ENCODE measurements at regions of chr3 and their contacts with region 1.

Region 1: DNA sequence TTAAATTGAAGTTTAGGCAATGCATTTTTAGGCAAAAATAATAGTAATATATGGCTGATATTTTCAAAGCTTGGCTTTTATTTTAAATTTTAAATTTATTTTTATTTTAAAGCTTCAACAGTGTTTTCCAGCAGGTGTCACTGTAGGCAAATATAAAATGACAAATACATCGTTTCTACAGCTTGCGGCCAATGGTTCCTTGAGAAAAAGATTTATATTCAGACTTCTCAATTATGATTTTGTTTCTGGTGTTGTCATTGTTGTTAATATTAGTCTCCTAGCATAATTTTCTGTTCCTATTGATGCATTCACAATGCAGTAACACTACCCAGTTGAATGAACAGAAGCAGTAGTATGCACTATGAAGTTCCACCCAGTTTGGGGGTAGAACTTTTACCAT is 220.7 kb upstream of the DNAJC19 start:
- DNase-seq: peak; percentile 45
- H3K4me3 ChIP-seq: no peak overlapping the region
- H3K27ac ChIP-seq: no peak overlapping the region
- H3K4me1 ChIP-seq: no peaks in the 10 kb centered on the region
- H3K27me3 ChIP-seq: peaks cover 15% of the 10 kb centered on the region
- CTCF ChIP-seq: peak; percentile 59

Region 2: DNA sequence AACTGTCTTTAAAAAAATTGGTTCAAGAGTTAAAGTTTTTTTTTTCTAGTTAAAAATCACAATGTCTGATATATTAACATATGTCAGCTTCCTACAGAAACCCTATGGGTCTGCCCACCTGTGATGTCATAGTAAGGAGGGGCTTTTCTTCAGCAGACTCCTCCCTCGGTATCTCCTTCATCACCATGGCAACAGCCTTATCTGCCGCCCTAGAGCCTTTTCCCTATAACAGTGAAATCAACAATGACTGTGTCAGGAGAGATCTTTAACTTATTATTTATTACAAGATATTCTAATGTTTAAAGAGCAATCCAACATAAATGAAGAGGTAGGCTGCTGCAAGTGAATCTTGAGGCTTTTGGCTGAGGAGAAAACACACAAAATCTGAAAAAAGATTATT is 1312.3 kb before region 1 on chr3:
- CTCF ChIA-PET with region 1: no interaction called
- POLR2A ChIA-PET with region 1: no interaction called
- intact Hi-C with region 1: no loop called
- DNase-seq: peak; percentile 83
- H3K4me3 ChIP-seq: no peak overlapping the region
- H3K27ac ChIP-seq: no peak overlapping the region
- H3K4me1 ChIP-seq: peaks cover 7% of the 10 kb centered on the region
- H3K27me3 ChIP-seq: peaks cover 93% of the 10 kb centered on the region
- CTCF ChIP-seq: no peak

Region 3: GRCh38 chr3:180870008-180870699 is 340.1 kb before region 1 on chr3:
- CTCF ChIA-PET with region 1: no interaction called
- POLR2A ChIA-PET with region 1: no interaction called
- intact Hi-C with region 1: no loop called
- DNase-seq: no peak
- H3K4me3 ChIP-seq: no peak overlapping the region
- H3K27ac ChIP-seq: no peak overlapping the region
- H3K4me1 ChIP-seq: no peaks in the 10 kb centered on the region
- H3K27me3 ChIP-seq: peaks cover 14% of the 10 kb centered on the region
- CTCF ChIP-seq: no peak

Region 4: DNA sequence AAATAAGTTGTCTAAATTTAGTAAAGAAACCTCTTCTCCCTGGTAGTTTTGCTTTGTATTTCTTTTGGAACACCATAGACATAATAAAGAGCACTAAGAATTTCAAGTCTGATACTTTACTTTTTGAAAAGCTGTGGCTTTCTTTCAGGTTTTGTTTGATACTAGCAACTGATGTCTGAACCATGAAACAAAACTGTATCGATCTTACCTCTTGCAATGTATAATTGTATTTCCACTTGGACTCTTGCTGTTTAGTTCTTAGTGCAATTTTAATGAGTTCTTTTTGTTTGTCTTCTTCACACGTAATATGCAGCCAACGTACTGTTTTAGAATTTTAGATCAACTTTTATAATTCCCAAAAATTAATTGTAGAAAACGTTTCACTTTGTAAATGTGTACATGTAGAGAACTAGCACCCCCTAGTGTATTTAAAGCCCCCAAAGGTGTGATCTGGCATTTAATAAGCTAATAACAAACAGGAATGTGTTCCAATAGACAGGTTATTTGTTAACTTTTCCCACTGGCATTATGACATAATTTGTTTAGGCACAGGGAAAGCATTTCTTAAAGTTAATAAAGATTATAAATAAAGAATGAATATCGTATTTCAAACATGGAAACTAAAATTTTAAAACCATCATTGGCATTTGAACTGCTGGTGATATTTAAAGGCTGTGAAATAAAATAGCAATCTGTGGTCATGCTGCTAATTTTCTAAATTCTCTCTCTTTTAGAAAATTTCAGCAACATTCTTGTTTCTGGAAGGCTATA is 68.4 kb after region 1 on chr3:
- CTCF ChIA-PET with region 1: no interaction called
- POLR2A ChIA-PET with region 1: no interaction called
- intact Hi-C with region 1: loop called (anchors 1 kb)
- DNase-seq: peak; percentile 13
- H3K4me3 ChIP-seq: no peak overlapping the region
- H3K27ac ChIP-seq: no peak overlapping the region
- H3K4me1 ChIP-seq: no peaks in the 10 kb centered on the region
- H3K27me3 ChIP-seq: peaks cover 44% of the 10 kb centered on the region
- CTCF ChIP-seq: peak; percentile 55

Region 5: GRCh38 chr3:181700168-181701087 is 490.2 kb after region 1 on chr3:
- CTCF ChIA-PET with region 1: interaction called, 6 read pairs
- POLR2A ChIA-PET with region 1: no interaction called
- intact Hi-C with region 1: loop called (anchors 2 kb)
- DNase-seq: peak; percentile 85
- H3K4me3 ChIP-seq: peak overlapping the region; percentile 35
- H3K27ac ChIP-seq: no peak overlapping the region
- H3K4me1 ChIP-seq: peaks cover 8% of the 10 kb centered on the region
- H3K27me3 ChIP-seq: peaks cover 46% of the 10 kb centered on the region
- CTCF ChIP-seq: peak; percentile 87

Region 6: DNA sequence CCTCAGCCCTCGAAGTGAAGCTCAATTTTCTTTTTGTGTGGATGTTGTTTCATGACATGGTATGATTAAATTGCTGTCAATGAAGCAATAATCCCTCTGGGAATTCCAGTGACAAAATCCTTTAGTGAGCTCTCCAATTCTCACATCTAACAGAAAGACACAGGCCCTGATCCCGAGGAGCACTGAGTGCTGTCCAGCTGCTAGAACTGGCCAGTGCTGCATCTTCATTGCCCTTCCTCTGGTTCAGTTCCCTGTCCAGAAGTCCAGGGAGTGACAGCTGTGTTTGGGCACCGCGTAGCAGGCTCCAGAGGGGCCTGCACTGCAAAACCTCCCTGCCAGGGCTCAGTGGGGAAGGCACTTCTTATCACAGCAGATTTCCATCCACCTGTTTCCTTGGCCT is 1066.2 kb after region 1 on chr3:
- CTCF ChIA-PET with region 1: interaction called, 11 read pairs
- POLR2A ChIA-PET with region 1: no interaction called
- intact Hi-C with region 1: no loop called
- DNase-seq: no peak
- H3K4me3 ChIP-seq: no peak overlapping the region
- H3K27ac ChIP-seq: no peak overlapping the region
- H3K4me1 ChIP-seq: no peaks in the 10 kb centered on the region
- H3K27me3 ChIP-seq: no peaks in the 10 kb centered on the region
- CTCF ChIP-seq: no peak

Region 7: DNA sequence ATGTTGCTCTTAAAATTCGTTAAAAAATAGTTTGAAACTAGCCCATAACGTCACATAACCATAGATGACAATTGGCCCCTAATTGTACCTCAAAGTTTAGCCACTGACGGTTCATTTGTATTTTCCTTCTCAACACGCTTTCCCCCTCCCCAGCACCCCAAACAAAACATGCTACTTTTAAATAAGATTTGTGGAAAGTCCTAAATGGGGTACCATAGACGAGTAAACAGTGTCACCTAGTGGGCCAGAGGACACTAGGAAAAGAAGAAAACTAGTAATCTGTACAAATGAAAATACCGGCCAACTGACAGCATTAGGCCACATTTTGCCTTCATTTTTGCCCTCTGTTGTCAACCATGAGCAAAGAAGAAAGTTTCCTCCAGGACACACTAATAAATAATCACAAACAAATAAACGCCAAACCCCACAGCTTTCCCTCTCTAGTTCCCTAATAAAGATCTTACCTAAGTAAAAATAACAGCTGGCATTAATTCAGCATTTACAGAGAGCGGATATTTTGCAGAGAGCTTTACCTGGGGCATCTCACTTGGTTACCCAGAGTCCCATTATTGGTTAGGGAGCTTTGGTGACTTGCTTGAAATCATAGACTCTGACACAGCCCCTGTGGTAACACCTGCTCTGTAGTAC is 1407.9 kb after region 1 on chr3:
- CTCF ChIA-PET with region 1: no interaction called
- POLR2A ChIA-PET with region 1: no interaction called
- intact Hi-C with region 1: loop called (anchors 5 kb)
- DNase-seq: peak; percentile 66
- H3K4me3 ChIP-seq: no peak overlapping the region
- H3K27ac ChIP-seq: no peak overlapping the region
- H3K4me1 ChIP-seq: no peaks in the 10 kb centered on the region
- H3K27me3 ChIP-seq: no peaks in the 10 kb centered on the region
- CTCF ChIP-seq: peak; percentile 71

Region 8: GRCh38 chr3:182683453-182683852 is 1473.2 kb after region 1 on chr3:
- CTCF ChIA-PET with region 1: interaction called, 3 read pairs
- POLR2A ChIA-PET with region 1: no interaction called
- intact Hi-C with region 1: loop called (anchors 5 kb)
- DNase-seq: peak; percentile 84
- H3K4me3 ChIP-seq: peak overlapping the region; percentile 61
- H3K27ac ChIP-seq: no peak overlapping the region
- H3K4me1 ChIP-seq: peaks cover 12% of the 10 kb centered on the region
- H3K27me3 ChIP-seq: peaks cover 28% of the 10 kb centered on the region
- CTCF ChIP-seq: peak; percentile 96

Measured in A673 (cell line).